CD4-positive, alpha-beta memory T cell (primary cell): ENCODE measurements at regions of chr1 and their contacts with region 1.

Region 1: DNA sequence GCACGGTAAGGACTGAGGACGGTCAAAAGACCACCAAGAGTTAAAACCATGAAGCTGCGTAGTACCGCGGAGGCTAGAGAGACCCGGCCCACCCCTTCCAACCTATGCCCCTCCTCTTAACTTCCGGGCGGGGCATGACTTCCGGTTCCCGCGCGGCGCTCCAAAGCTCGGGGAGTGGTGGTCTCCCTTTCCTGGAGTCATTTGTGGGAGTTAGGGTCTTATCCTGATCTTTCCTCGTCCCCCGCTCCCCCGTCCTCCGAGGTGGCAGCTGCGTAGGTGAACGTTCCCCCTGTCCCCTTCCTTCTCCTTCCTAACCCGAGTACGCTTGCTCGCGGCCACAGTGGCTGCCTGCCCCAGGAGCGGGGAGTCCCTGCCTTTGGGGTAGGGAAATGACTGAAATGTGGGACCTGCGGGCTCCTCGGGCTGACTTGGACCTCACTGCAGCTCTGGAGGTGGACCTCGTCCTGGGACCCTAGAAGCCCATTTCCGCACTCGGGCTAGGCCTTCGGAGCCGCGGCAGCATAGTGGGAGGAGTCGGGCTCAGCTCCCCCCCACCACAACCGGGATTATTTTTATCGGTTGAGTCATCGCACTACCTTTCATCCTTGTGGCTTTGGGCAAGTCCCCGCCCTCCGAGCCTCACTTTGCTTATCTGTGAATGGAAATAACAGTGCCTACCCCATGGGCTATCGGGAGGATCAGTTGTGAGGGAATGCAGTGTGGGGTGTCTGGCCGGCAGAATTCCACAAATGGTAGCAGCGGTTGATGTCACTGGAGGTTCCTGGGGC is 24.1 kb downstream of the CELA3A start:
- DNase-seq: peak; percentile 89 to 97 (median 92)
- H3K4me3 ChIP-seq: peak overlapping the region; percentile 95 to 99
- H3K4me3 Mint-ChIP-seq: peak overlapping the region; percentile 89 to 98 (median 94)
- H3K27ac ChIP-seq: peak overlapping the region; percentile 97
- H3K27ac Mint-ChIP-seq: peak overlapping the region; percentile 91 to 100 (median 99)
- H3K4me1 ChIP-seq: peaks cover 46% of the 10 kb centered on the region
- H3K4me1 Mint-ChIP-seq: peaks cover 31 to 62% (median 47%) of the 10 kb centered on the region in 4 donors
- H3K27me3 ChIP-seq: no peaks in the 10 kb centered on the region
- H3K27me3 Mint-ChIP-seq: no peaks in the 10 kb centered on the region

Region 2: GRCh38 chr1:21703318-21703963 is 322.1 kb before region 1 on chr1:
- CTCF ChIA-PET with region 1: no interaction called
- POLR2A ChIA-PET with region 1: no interaction called
- intact Hi-C with region 1: no loop called
- DNase-seq: peak in 2 of 5 donors; percentile 4 to 7
- H3K4me3 ChIP-seq: no peak overlapping the region
- H3K4me3 Mint-ChIP-seq: no peak overlapping the region
- H3K27ac ChIP-seq: no peak overlapping the region
- H3K27ac Mint-ChIP-seq: peak overlapping the region in 1 of 7 donors; percentile 58
- H3K4me1 ChIP-seq: no peaks in the 10 kb centered on the region
- H3K4me1 Mint-ChIP-seq: peaks cover 0 to 12% (median 4%) of the 10 kb centered on the region in 4 donors
- H3K27me3 ChIP-seq: no peaks in the 10 kb centered on the region
- H3K27me3 Mint-ChIP-seq: no peaks in the 10 kb centered on the region

Region 3: DNA sequence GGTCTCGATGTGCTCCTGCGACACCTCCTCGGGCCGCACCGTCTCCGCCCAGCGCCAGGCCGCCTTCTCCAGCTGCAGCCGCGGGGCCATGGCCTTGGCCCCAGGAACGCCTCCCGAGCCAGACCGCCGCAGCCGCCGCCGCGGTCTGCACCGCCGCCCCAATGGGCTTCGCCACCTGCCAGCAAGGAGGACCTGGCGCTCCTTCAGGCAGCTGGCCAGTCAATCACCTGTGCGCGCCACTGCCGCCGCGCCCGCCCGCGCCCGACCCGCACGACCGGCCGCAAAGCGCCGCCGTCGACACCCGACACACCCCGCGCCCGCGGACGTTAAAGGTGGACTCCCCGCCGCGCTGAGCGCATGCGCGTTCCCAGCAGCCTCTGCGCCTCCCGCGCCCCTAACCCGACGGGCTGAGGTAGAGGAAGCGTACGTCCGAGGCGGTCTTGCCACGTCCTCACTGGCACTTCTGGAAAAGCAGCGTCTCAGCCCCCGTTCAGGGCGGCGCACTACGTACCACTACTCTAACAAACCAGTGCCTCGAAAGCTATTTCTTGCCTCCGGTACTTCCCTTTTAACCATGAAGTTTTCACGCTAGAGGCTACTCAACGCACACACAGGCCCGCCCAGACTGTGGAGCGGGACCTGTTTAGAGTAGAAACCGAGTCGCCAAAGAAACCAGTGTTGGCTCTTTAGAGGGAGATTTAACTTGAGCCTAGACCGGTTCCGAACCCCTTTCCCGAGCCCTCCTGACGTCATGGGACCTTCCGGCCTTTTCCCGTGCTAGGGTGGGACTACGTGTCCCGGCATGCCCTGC is 242.5 kb before region 1 on chr1 and contains the start of gene USP48:
- CTCF ChIA-PET with region 1: interaction called, 9 read pairs
- POLR2A ChIA-PET with region 1: interaction called, 52 read pairs
- intact Hi-C with region 1: loop called (anchors 1 kb)
- DNase-seq: peak; percentile 97 to 98 (median 97)
- H3K4me3 ChIP-seq: peak within 1 kb of the TSS; percentile 47 to 97
- H3K4me3 Mint-ChIP-seq: peak within 1 kb of the TSS; percentile 92 to 99 (median 97)
- H3K27ac ChIP-seq: peak within 1 kb of the TSS; percentile 99
- H3K27ac Mint-ChIP-seq: peak within 1 kb of the TSS; percentile 100
- H3K4me1 ChIP-seq: peaks cover 37% of the 10 kb centered on the region
- H3K4me1 Mint-ChIP-seq: peaks cover 22 to 44% (median 33%) of the 10 kb centered on the region in 4 donors
- H3K27me3 ChIP-seq: no peaks in the 10 kb centered on the region
- H3K27me3 Mint-ChIP-seq: peaks cover 0 to 3% of the 10 kb centered on the region in 2 donors
- total RNA-seq, gene USP48: 110 to 117 TPM

Region 4: DNA sequence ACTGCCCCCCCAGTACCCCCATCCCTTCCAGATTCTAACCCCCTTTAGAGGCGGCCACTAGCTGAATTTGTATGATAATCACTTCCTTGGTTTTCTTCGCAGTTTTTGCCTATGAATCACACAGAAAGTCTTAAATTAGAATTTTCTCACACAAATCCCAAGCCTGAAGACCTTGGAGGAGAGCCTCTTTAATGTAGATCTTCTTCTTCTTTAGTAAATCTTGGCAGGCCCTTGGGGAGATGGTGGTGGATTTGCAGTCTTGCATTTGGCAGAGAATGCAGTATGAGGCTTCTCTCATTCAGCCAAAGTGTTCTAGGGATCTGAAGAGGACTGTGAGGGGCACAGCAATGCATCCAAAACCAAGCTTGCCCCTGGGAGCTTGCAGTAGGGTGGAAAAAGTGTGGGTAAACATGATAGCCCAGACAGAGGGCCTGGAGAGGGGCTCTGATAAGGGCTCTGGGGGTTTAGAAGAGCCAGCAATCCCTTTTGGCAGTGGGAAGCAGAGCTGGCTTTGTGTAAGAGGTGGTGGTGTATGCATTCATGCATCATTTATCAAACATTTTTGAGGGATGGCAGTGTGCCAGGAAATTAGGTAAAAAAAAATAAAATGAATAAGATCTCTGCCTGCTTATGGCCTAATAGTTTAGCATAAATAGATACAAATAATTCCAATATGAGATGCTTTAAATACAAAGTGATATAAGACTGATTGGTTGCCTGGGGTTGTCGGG is 19.3 kb after region 1 on chr1:
- CTCF ChIA-PET with region 1: interaction called, 113 read pairs
- POLR2A ChIA-PET with region 1: interaction called, 874 read pairs
- intact Hi-C with region 1: no loop called
- DNase-seq: no peak
- H3K4me3 ChIP-seq: no peak overlapping the region
- H3K4me3 Mint-ChIP-seq: peak overlapping the region in 4 of 8 donors; percentile 13 to 74 (median 38)
- H3K27ac ChIP-seq: peak overlapping the region; percentile 24
- H3K27ac Mint-ChIP-seq: peak overlapping the region; percentile 11 to 91 (median 68)
- H3K4me1 ChIP-seq: peaks cover 68% of the 10 kb centered on the region
- H3K4me1 Mint-ChIP-seq: peaks cover 46 to 80% (median 60%) of the 10 kb centered on the region in 4 donors
- H3K27me3 ChIP-seq: no peaks in the 10 kb centered on the region
- H3K27me3 Mint-ChIP-seq: no peaks in the 10 kb centered on the region

Region 5: DNA sequence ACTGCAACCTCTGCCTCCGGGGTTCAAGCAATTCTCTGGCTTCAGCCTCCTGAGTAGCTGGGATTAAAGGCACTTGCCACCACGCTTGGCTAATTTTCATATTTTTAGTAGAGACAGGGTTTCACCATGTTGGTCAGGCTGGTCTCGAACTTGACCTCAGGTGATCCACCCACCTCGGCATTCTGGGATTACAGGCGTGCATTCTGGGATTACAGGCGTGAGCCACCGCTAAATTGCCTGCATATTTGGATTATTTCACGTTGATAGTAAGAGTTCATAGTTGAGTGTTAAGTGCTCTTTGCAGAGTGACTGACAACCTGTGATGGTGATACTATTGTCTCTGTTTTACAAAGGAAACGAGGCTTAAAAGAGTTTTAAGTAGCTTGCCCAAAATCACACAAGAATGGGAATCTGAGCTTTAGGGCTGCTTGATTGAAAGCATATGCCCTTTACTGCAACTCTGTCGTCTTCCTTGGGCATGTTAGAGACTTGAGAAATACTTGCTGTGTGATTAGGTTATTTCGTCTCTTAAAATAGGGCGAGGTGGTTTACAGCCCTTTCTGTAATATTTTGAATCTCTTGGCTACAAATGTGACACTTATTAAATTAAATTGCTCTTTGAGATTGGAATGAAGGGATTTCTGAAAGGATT is 39.3 kb after region 1 on chr1:
- CTCF ChIA-PET with region 1: interaction called, 22 read pairs
- POLR2A ChIA-PET with region 1: interaction called, 874 read pairs
- intact Hi-C with region 1: no loop called
- DNase-seq: no peak
- H3K4me3 ChIP-seq: no peak overlapping the region
- H3K4me3 Mint-ChIP-seq: peak overlapping the region; percentile 26 to 80 (median 70)
- H3K27ac ChIP-seq: no peak overlapping the region
- H3K27ac Mint-ChIP-seq: peak overlapping the region; percentile 54 to 88 (median 71)
- H3K4me1 ChIP-seq: peaks cover 100% of the 10 kb centered on the region
- H3K4me1 Mint-ChIP-seq: peaks cover 66 to 93% (median 80%) of the 10 kb centered on the region in 4 donors
- H3K27me3 ChIP-seq: no peaks in the 10 kb centered on the region
- H3K27me3 Mint-ChIP-seq: no peaks in the 10 kb centered on the region

Region 6: DNA sequence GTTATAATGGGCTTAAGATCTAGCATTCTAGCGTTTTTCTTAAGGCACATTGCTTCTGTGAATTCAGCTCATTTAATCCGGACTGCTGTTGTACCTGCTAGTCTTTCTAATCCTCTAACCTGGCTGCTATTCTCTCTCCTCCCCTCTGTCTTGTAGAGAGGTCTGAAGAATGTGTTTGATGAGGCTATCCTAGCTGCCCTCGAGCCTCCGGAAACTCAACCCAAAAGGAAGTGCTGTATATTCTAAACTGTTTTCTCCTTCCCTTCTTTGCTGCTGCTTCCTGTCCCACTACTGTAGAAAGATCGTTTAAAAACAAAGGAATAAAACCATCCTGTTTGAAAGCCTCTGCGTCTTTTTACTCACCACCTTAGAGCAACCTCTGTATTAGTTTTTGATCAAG is 64.2 kb after region 1 on chr1:
- CTCF ChIA-PET with region 1: interaction called, 21 read pairs
- POLR2A ChIA-PET with region 1: interaction called, 38 read pairs
- intact Hi-C with region 1: no loop called
- DNase-seq: peak in 2 of 5 donors; percentile 12 to 15
- H3K4me3 ChIP-seq: peak overlapping the region in 1 of 2 donors; percentile 6
- H3K4me3 Mint-ChIP-seq: peak overlapping the region; percentile 55 to 83 (median 78)
- H3K27ac ChIP-seq: peak overlapping the region; percentile 22
- H3K27ac Mint-ChIP-seq: peak overlapping the region; percentile 76 to 83 (median 79)
- H3K4me1 ChIP-seq: peaks cover 86% of the 10 kb centered on the region
- H3K4me1 Mint-ChIP-seq: peaks cover 61 to 96% (median 78%) of the 10 kb centered on the region in 4 donors
- H3K27me3 ChIP-seq: no peaks in the 10 kb centered on the region
- H3K27me3 Mint-ChIP-seq: no peaks in the 10 kb centered on the region

Region 7: DNA sequence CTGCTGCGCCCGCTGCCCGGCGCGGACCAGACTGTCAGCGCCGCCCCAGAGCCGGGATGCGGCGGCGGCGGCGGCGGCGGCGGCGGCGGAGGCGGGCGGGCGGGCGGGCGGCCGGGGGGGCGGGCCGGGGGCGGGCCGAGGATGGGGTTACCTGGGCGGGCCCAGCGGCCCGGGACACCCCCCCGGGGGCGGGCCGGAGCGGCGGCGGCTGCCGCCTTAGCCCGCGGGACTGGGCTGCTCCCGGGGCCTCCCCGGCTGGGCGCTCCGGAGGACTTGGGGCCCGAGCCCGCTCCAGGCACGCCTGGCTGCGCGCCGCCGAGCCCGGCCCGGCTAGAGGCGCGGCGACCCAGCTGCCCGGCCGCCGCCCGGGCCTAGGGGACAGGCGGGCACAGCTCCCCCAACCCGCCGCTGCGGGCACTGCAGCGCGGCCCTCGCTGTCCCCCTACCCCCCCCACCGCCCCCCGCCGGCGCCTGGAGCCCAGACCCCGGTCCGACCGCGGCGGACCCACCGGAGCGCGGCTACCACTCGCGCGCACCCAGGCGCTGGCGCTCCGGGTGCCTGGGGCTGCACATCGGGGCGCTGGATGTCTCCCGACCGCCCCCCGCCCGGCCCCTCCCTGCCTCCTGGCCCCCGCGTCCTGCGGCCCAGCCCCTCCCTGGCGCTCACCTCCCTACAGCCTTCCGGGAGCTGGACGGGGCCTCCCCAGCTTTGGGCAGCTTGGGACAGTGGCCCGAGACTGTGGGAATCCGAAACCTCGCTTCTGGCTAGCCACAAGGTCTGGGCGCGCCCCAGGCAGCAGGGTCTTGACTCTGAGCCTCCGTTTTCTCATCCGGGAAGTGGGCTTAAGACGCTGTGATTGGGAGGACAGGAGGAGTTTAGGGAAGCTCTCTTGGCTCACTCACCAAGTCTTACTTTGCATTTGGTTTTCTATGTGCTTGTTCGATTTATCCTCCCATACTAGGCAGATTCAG is 117.8 kb after region 1 on chr1 and contains the start of gene WNT4:
- CTCF ChIA-PET with region 1: no interaction called
- POLR2A ChIA-PET with region 1: no interaction called
- intact Hi-C with region 1: no loop called
- DNase-seq: peak in 3 of 5 donors; percentile 15 to 24 (median 21)
- H3K4me3 ChIP-seq: no peak within 1 kb of the TSS
- H3K4me3 Mint-ChIP-seq: peak within 1 kb of the TSS; percentile 64 to 81 (median 73)
- H3K27ac ChIP-seq: no peak within 1 kb of the TSS
- H3K27ac Mint-ChIP-seq: peak within 1 kb of the TSS in 1 of 7 donors; percentile 64
- H3K4me1 ChIP-seq: no peaks in the 10 kb centered on the region
- H3K4me1 Mint-ChIP-seq: peaks cover 4 to 14% (median 9%) of the 10 kb centered on the region in 4 donors
- H3K27me3 ChIP-seq: peaks cover 13% of the 10 kb centered on the region
- H3K27me3 Mint-ChIP-seq: peaks cover 35 to 36% of the 10 kb centered on the region in 2 donors
- total RNA-seq, gene WNT4: not detected